CD4-positive, alpha-beta memory T cell (primary cell): ENCODE measurements at regions of chr14 and their contacts with region 1.

Region 1: DNA sequence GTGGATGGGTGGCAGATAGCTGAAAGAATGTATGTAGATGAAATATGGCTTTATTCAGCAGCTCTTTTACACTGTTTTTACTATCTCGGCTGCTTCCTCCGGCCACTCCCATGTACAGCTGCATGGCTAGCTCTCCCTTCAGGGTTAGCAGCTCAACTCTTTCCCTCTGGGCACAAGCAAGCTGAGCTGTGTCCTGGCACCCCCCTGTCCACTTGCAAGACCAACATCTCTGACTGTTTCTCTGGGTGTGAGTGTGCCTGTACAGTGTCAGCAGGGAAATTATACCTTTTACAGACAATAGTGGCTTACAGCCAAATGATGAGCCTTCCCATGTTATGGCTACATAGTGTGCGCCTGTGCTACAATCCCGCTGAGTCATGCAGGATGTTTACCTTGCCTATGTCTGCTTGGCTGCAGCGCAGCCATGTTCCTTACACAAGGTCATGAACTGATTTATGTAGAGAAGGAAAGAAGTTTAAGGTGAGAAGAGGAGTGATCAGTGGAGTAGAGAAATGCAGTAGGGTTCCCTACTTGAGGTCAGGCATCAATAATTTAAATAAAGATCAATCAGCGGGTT is 125.9 kb upstream of the DDHD1 start:
- DNase-seq: no peak
- H3K4me3 ChIP-seq: no peak overlapping the region
- H3K4me3 Mint-ChIP-seq: no peak overlapping the region
- H3K27ac ChIP-seq: no peak overlapping the region
- H3K27ac Mint-ChIP-seq: no peak overlapping the region
- H3K4me1 ChIP-seq: no peaks in the 10 kb centered on the region
- H3K4me1 Mint-ChIP-seq: no peaks in the 10 kb centered on the region
- H3K27me3 ChIP-seq: no peaks in the 10 kb centered on the region
- H3K27me3 Mint-ChIP-seq: no peaks in the 10 kb centered on the region

Region 2: DNA sequence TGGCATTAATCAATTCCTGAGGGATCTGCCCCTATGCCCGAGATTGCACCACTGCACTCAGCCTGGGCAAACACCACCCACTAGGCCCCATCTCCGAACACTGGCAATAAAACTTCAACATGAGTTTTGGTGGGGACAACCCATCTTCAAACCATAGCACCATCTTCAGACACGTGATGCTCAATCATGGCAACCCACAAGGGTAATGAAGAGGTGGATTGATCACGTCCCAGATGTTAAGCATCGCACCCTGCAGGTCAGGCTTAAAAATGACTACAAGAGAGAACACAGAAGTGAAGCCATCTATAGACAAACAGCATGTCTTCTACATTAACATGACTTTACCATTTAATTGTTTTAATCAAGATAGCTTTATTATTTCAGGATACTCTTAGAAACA is 83.1 kb before region 1 on chr14:
- CTCF ChIA-PET with region 1: no interaction called
- POLR2A ChIA-PET with region 1: no interaction called
- intact Hi-C with region 1: no loop called
- DNase-seq: no peak
- H3K4me3 ChIP-seq: no peak overlapping the region
- H3K4me3 Mint-ChIP-seq: no peak overlapping the region
- H3K27ac ChIP-seq: no peak overlapping the region
- H3K27ac Mint-ChIP-seq: no peak overlapping the region
- H3K4me1 ChIP-seq: no peaks in the 10 kb centered on the region
- H3K4me1 Mint-ChIP-seq: no peaks in the 10 kb centered on the region
- H3K27me3 ChIP-seq: no peaks in the 10 kb centered on the region
- H3K27me3 Mint-ChIP-seq: no peaks in the 10 kb centered on the region

Region 3: DNA sequence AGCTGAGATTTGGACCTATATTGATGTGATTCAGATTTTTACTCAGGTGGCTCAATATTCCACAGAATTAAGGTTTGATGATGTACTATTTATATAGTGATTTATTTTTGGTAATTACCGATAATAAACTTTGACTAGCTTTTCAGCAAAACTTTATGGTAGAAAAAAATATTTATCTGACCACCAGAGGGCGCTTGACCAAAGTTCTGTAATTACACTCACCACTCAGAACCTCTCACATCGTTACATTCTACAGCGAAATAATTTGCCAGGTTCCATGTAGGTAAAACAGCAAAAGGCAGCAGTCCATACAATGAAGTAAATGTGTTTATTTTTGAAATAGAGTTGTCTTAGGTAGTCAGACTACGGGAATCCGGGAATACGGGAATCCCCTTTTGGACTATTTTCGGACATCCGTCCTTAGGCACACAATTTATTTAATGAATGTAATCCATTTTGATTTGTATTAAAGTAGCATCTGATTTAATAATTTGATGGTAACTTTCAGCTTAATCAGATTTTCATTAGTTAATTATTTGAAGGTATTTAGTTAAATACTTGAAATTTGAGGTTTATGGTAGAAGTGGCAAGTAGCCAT is 17.1 kb after region 1 on chr14:
- CTCF ChIA-PET with region 1: interaction called, 10 read pairs
- POLR2A ChIA-PET with region 1: no interaction called
- intact Hi-C with region 1: no loop called
- DNase-seq: peak in 4 of 5 donors; percentile 35 to 39 (median 37)
- H3K4me3 ChIP-seq: no peak overlapping the region
- H3K4me3 Mint-ChIP-seq: no peak overlapping the region
- H3K27ac ChIP-seq: no peak overlapping the region
- H3K27ac Mint-ChIP-seq: no peak overlapping the region
- H3K4me1 ChIP-seq: no peaks in the 10 kb centered on the region
- H3K4me1 Mint-ChIP-seq: no peaks in the 10 kb centered on the region
- H3K27me3 ChIP-seq: no peaks in the 10 kb centered on the region
- H3K27me3 Mint-ChIP-seq: no peaks in the 10 kb centered on the region

Region 4: GRCh38 chr14:53564870-53565269 is 285.9 kb after region 1 on chr14:
- CTCF ChIA-PET with region 1: no interaction called
- POLR2A ChIA-PET with region 1: no interaction called
- intact Hi-C with region 1: no loop called
- DNase-seq: no peak
- H3K4me3 ChIP-seq: no peak overlapping the region
- H3K4me3 Mint-ChIP-seq: no peak overlapping the region
- H3K27ac ChIP-seq: no peak overlapping the region
- H3K27ac Mint-ChIP-seq: no peak overlapping the region
- H3K4me1 ChIP-seq: no peaks in the 10 kb centered on the region
- H3K4me1 Mint-ChIP-seq: no peaks in the 10 kb centered on the region
- H3K27me3 ChIP-seq: no peaks in the 10 kb centered on the region
- H3K27me3 Mint-ChIP-seq: peaks cover 0 to 2% of the 10 kb centered on the region in 2 donors